PC-3 (cell line): ENCODE measurements at regions of chr6 and their contacts with region 1.

Region 1: GRCh38 chr6:122730775-122731386 is 48.6 kb upstream of the FABP7 start:
- DNase-seq: peak; percentile 44
- ATAC-seq: no peak
- H3K4me3 ChIP-seq: no peak overlapping the region
- H3K27ac ChIP-seq: no peak overlapping the region
- H3K4me1 ChIP-seq: 0 out of 2 replicates have a peak, but pooled peaks cover 5% of the 10 kb centered on the region
- H3K27me3 ChIP-seq: no peaks in the 10 kb centered on the region
- CTCF ChIP-seq: peak; percentile 74

Region 2: DNA sequence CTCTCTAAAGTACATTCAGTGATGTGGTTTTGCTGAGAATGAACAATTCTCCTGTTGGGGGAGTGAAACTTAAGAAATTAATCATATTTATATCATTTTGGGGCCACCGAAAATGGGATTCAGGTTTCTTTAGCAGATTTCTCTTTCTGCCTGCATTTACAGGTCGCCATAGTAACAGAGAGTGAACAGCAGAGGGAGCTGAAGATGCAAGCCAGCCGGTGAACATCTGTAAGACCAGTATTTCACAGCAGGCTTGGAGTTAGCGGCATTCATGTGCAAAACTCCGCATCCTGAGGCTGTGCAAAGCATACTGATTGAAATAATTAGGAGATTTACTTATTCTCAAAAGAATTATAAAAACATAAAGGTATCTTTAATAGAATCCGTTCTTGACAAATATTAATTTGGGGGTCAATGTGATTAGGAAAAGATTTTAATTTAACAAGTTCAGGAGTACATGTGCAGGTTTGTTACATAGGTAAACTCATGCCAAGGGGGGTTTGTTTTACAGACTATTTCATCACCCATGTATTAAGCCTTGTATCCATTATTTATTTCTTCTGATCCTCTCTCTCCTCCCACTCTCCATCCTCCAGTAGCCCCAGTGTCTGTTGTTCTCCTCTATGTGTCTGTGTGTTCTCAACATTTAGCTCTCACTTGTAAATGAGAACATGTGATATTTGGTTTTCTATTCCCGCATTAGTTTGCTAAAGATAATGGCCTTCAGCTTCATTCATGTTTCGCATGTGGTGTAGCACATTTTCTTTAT is 349.2 kb before region 1 on chr6:
- CTCF ChIA-PET with region 1: no interaction called
- POLR2A ChIA-PET with region 1: no interaction called
- intact Hi-C with region 1: no loop called
- DNase-seq: peak; percentile 54
- ATAC-seq: peak; percentile 71
- H3K4me3 ChIP-seq: no peak overlapping the region
- H3K27ac ChIP-seq: no peak overlapping the region
- H3K4me1 ChIP-seq: no peaks in the 10 kb centered on the region
- H3K27me3 ChIP-seq: peaks cover 6% of the 10 kb centered on the region
- CTCF ChIP-seq: peak; percentile 67

Region 3: DNA sequence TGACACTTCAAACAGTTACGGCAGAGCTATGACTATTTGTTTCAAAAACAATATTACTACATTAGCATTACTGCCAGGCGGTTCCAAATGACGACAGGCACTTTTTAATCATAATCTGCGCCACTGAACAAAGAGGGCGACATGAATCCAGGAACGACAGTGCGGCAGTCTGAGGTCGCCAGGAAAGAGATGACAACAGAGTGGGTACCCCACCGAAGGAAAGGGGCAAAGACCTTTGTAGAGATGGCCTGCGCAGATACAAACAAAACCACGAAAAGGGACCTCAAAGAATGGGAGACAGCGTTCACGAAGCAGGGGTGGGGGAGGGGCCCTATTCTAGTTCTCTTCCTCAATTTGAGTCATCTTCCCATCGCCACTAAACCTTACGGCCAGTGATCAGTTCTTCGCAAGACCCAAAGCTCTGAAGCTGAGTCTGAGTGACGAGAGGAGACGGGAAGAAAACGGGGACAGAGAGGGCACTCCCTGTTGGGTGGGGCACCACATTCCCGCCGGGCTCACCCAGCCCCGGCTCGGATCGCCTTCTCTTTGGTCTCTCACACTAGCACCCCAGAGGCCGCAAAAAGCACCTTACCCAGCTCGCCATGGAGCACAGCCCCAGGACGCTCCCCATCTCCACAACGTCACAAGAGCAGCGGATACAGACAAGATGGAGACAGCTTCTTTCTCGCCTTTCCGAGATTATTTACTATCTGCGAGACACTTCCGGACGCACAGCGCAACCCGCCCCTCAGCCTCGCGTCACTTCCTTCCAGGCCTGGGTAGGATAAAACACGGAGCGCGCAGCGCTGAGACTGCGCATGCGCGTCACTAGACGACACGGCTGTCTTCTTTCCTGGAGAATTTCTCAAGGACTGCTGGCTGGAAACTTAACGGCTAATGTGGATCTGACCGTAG is 259.5 kb before region 1 on chr6 and contains the start of gene SERINC1:
- CTCF ChIA-PET with region 1: no interaction called
- POLR2A ChIA-PET with region 1: no interaction called
- intact Hi-C with region 1: loop called (anchors 5 kb)
- DNase-seq: peak; percentile 90
- ATAC-seq: peak; percentile 89
- H3K4me3 ChIP-seq: peak within 1 kb of the TSS; percentile 91
- H3K27ac ChIP-seq: peak within 1 kb of the TSS; percentile 43
- H3K4me1 ChIP-seq: no peaks in the 10 kb centered on the region
- H3K27me3 ChIP-seq: no peaks in the 10 kb centered on the region
- CTCF ChIP-seq: no peak
- total RNA-seq, gene SERINC1: 27.8 and 31.7 TPM in 2 replicates

Region 4: DNA sequence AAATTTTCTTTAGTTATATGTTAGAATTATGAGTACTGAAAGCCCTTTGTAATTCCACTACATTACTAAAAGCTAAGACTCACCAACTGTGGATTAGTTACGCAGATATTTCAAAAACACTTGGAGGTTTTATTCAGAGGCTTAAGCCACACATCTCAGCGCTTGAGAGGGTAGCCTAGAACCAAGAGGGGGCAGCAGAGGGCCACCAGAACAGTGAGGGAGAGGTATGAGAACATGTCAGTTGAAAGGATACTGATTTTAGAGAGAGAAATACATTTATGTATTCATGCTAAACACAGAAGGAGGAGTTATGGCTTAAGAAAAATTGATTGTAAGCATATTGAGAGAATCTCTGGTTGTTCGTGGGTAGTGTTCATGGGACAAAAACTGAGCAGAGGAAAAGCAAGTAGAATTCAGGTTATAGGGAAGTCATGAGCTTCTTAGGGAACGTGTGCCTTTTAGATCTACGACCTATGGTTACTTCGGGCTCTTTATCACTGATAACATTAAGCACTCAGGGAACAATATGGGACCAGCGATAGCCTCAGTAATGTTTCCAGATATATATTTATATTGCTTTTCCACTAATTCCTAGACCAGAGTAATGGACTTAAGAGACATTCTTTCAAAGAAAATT is 238.8 kb before region 1 on chr6:
- CTCF ChIA-PET with region 1: no interaction called
- POLR2A ChIA-PET with region 1: no interaction called
- intact Hi-C with region 1: loop called (anchors 2 kb)
- DNase-seq: peak; percentile 80
- ATAC-seq: peak; percentile 98
- H3K4me3 ChIP-seq: no peak overlapping the region
- H3K27ac ChIP-seq: no peak overlapping the region
- H3K4me1 ChIP-seq: peaks cover 15% of the 10 kb centered on the region
- H3K27me3 ChIP-seq: no peaks in the 10 kb centered on the region
- CTCF ChIP-seq: peak; percentile 93

Region 5: DNA sequence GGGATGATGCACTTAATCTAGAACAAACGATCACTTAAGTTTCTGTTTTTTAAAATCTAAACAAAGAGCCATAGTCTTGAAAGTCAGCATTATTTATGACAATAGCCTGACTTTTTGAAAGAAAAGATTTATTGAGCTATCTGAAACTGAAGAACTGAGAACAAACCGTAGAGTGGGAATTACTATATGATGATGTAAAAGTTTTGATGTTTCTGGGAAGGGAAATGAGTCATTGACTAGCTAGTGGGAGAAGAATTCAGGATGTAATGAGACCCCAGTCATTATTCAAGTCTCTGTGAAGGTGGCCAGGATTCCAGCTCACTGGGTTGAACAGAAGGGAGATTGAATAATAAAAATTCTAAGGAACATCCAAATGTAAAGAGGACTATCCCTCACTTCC is 34.8 kb before region 1 on chr6:
- CTCF ChIA-PET with region 1: no interaction called
- POLR2A ChIA-PET with region 1: no interaction called
- intact Hi-C with region 1: no loop called
- DNase-seq: peak; percentile 83
- ATAC-seq: peak; percentile 46
- H3K4me3 ChIP-seq: peak overlapping the region; percentile 48
- H3K27ac ChIP-seq: peak overlapping the region; percentile 99
- H3K4me1 ChIP-seq: peaks cover 53% of the 10 kb centered on the region
- H3K27me3 ChIP-seq: no peaks in the 10 kb centered on the region
- CTCF ChIP-seq: no peak

Region 6: DNA sequence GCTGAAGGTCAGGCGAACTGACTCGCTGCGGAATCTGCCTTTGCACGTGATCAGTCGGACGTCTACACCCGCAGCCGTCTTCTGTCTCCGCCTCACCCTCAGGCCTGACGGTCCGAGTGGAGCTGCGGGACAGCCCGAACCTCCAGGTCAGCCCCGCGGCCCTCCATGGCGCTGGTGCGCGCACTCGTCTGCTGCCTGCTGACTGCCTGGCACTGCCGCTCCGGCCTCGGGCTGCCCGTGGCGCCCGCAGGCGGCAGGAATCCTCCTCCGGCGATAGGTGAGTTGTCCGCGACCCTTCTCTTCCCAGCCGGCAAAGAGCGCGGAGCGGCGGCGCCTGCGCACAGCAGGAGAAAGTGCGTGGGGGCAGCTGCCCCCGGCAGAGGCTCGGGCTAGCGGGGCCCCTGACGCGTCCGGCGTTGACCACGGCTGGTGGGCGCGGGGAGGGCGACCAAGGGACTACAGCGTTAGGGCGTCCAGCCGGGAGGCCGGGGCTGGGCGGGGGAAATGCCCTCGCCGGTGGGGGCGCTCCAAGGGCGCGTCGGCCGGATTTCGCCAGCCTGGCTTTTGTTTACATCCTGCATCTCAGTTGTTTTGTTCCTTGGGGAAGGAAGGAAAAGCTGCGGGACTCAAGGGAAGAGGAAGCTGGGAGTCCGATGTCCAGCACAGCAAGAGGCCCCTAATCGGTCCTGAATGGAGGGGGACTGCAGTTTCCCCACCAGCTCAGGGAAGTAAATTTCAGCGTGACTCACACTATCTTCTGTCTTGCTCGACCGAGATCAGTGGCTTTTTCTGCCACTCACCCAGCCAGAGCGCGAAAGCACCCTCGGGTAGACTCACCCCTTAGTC is 58.5 kb after region 1 on chr6 and contains the start of gene SMPDL3A:
- CTCF ChIA-PET with region 1: no interaction called
- POLR2A ChIA-PET with region 1: no interaction called
- intact Hi-C with region 1: loop called (anchors 5 kb)
- DNase-seq: peak; percentile 72
- ATAC-seq: peak; percentile 73
- H3K4me3 ChIP-seq: peak within 1 kb of the TSS; percentile 88
- H3K27ac ChIP-seq: peak within 1 kb of the TSS; percentile 80
- H3K4me1 ChIP-seq: peaks cover 27% of the 10 kb centered on the region
- H3K27me3 ChIP-seq: no peaks in the 10 kb centered on the region
- CTCF ChIP-seq: peak; percentile 63
- total RNA-seq, gene SMPDL3A: 2.7 and 4.6 TPM in 2 replicates

Region 7: DNA sequence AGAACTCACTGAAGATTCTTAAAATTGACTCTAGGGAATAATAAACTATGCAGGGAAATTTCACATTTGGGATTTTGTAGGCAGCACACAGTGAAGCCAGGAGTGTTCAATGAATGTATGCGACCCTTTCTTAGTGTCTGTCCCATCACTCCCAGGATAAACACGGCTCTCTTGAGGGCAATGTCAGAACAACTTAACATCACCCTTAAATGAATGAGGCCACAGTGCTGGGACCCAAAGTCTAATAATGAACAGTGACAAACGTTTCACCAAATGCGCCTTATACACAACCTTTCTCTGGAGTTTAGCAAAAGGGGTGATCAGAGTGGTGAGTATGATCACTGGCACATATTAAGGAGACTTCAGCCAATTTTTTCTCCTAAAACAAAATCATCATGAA is 502.5 kb after region 1 on chr6:
- CTCF ChIA-PET with region 1: no interaction called
- POLR2A ChIA-PET with region 1: no interaction called
- intact Hi-C with region 1: no loop called
- DNase-seq: no peak
- ATAC-seq: no peak
- H3K4me3 ChIP-seq: no peak overlapping the region
- H3K27ac ChIP-seq: no peak overlapping the region
- H3K4me1 ChIP-seq: no peaks in the 10 kb centered on the region
- H3K27me3 ChIP-seq: 0 out of 2 replicates have a peak, but pooled peaks cover 6% of the 10 kb centered on the region
- CTCF ChIP-seq: no peak